Activated B cell treated with CpG ODN at 0.5 μM for 24 hours (primary cell): ENCODE measurements at regions of chr10 and their contacts with region 1.

Region 1: DNA sequence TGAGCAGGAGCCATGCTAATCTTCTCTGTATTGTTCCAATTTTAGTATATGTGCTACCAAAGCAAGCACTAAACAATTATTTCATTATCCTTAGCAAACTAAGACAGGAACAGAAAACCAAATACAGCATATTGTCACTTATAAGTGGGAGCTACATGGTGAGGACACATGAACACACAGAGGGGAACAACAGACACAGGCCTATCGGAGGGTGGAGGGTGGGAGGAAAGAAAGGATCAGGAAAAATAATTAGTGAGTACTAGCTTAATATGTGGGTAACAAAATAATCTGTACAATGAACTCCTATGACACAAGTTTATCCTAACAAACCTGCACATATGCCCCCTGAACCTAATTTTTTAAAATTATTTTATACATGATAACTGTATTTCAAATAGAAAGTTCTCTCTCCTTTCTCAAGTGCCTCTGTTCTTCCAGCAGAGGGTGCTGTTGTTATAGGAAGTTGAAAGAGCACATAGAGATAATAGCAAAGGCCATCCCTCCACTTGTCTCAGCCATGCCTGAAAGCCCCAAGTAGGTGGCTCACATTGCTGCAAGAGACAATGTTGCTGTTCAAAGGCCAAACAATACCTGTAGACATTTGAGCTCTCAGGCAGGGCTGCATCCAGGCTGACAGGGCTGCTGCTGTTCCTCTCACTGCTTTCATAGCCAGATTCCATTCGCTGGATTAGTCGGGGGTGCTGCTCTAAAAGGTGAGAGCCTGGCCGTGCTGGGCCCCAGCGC is 33.4 kb upstream of the PPP3CB start:
- DNase-seq: peak; percentile 20
- ATAC-seq: peak; percentile 86
- H3K4me3 Mint-ChIP-seq: no peak overlapping the region
- H3K27ac Mint-ChIP-seq: no peak overlapping the region
- H3K4me1 Mint-ChIP-seq: no peaks in the 10 kb centered on the region
- H3K27me3 Mint-ChIP-seq: no peaks in the 10 kb centered on the region
- CTCF ChIP-seq: peak; percentile 68

Region 2: GRCh38 chr10:73501651-73502050 is 27.6 kb before region 1 on chr10:
- CTCF ChIA-PET with region 1: no interaction called
- POLR2A ChIA-PET with region 1: no interaction called
- intact Hi-C with region 1: loop called (anchors 2 kb)
- DNase-seq: no peak
- ATAC-seq: peak; percentile 84
- H3K4me3 Mint-ChIP-seq: peak overlapping the region; percentile 42
- H3K27ac Mint-ChIP-seq: peak overlapping the region; percentile 79
- H3K4me1 Mint-ChIP-seq: peaks cover 36% of the 10 kb centered on the region
- H3K27me3 Mint-ChIP-seq: no peaks in the 10 kb centered on the region
- CTCF ChIP-seq: no peak

Region 3: GRCh38 chr10:73644015-73644743 is 114.9 kb after region 1 on chr10:
- CTCF ChIA-PET with region 1: interaction called, 90 read pairs
- POLR2A ChIA-PET with region 1: interaction called, 5 read pairs
- intact Hi-C with region 1: loop called (anchors 1 kb)
- DNase-seq: no peak
- ATAC-seq: peak; percentile 69
- H3K4me3 Mint-ChIP-seq: peak overlapping the region; percentile 65
- H3K27ac Mint-ChIP-seq: peak overlapping the region; percentile 26
- H3K4me1 Mint-ChIP-seq: peaks cover 13% of the 10 kb centered on the region
- H3K27me3 Mint-ChIP-seq: peaks cover 4% of the 10 kb centered on the region
- CTCF ChIP-seq: peak; percentile 62

Region 4: DNA sequence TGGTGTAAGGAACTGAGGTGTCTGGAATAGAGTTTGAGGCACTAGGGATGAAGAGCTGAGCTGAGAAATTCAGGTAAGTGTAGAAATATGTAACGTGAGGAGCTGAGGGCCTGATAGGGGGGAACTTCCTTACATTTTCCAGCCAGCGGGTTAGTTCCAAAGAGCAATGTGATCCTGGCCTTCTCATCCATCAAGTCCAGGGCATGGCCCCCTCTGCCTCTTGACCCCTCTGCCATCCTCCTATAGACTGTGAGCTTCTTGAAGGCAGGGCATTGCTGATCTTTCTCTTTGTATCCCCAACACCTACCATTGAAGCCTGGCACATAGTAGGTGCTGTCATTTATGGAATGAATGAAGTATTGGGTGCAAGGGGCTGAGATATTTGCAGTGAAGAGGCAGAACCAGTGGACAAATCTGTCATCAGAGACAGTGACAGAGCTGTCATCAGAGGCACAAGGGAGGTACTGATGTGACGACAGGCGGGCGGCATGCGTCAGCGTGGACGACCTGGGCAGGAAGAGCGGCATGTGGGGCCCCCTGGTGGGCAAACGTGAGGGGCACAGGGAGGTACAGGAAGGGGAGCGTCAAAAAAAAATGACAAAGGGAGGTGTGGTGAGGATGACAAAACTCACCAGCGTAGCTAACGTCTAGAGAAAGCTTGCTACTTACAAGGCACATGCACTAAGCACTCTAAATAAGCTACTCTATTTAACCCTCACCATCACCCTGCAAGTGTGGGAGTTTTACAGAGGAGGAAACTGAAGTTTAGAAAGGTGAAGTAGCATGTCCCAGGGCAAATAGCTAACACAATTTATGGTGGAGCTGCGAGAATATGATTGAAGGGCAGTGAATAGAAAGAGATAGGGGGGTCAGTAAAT is 350.3 kb after region 1 on chr10:
- CTCF ChIA-PET with region 1: no interaction called
- POLR2A ChIA-PET with region 1: no interaction called
- intact Hi-C with region 1: loop called (anchors 2 kb)
- DNase-seq: peak; percentile 86
- ATAC-seq: peak; percentile 96
- H3K4me3 Mint-ChIP-seq: no peak overlapping the region
- H3K27ac Mint-ChIP-seq: peak overlapping the region; percentile 67
- H3K4me1 Mint-ChIP-seq: peaks cover 22% of the 10 kb centered on the region
- H3K27me3 Mint-ChIP-seq: no peaks in the 10 kb centered on the region
- CTCF ChIP-seq: no peak